ENCODE measurements at regions of chr1 and their contacts with region 1.

Region 1: DNA sequence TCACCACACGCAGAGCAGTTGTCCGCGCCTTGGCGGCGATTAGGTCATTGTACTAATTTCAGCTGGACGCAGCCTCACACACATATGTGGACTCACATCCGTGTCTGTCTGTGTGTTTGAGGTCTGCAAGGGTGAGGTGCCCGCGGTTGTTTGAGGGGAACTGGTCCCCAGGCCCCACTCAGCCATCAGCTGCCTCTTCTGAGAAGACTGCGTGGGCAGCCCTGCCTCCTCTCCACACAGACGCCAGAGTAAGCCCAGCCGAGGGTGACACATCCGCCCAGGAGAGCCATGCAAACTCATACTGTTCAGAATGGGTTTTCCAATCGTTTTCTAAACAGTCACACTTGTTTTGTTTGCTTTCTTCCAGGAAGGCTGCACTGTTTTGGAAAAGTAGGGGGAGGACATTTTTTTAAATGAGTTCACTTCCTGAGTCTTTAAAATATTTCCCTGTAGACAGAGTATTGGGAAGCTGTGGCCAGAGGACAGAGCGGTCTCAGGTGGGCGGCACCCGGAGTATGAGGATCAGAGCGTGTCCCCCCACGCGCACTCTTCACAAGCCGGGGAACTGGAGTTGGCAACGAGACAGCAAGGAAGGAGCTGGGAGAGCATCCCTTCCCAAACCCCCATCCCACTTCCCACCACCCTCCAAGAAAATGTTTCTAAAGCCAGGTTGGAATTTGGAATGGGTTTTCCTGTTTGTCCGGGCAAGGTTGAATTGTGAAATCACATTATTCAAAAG is 53.3 kb downstream of the TOMM20 start:
- DNase-seq: no peak
- H3K4me3 Mint-ChIP-seq: peak overlapping the region; percentile 56
- H3K27ac Mint-ChIP-seq: peak overlapping the region; percentile 99
- H3K4me1 Mint-ChIP-seq: peaks cover 34% of the 10 kb centered on the region
- H3K27me3 Mint-ChIP-seq: no peaks in the 10 kb centered on the region

Region 2: GRCh38 chr1:234499119-234499942 is 576.0 kb before region 1 on chr1:
- intact Hi-C with region 1: loop called (anchors 1 kb)
- DNase-seq: peak; percentile 81
- H3K4me3 Mint-ChIP-seq: peak overlapping the region; percentile 11
- H3K27ac Mint-ChIP-seq: peak overlapping the region; percentile 93
- H3K4me1 Mint-ChIP-seq: peaks cover 80% of the 10 kb centered on the region
- H3K27me3 Mint-ChIP-seq: no peaks in the 10 kb centered on the region

Region 3: DNA sequence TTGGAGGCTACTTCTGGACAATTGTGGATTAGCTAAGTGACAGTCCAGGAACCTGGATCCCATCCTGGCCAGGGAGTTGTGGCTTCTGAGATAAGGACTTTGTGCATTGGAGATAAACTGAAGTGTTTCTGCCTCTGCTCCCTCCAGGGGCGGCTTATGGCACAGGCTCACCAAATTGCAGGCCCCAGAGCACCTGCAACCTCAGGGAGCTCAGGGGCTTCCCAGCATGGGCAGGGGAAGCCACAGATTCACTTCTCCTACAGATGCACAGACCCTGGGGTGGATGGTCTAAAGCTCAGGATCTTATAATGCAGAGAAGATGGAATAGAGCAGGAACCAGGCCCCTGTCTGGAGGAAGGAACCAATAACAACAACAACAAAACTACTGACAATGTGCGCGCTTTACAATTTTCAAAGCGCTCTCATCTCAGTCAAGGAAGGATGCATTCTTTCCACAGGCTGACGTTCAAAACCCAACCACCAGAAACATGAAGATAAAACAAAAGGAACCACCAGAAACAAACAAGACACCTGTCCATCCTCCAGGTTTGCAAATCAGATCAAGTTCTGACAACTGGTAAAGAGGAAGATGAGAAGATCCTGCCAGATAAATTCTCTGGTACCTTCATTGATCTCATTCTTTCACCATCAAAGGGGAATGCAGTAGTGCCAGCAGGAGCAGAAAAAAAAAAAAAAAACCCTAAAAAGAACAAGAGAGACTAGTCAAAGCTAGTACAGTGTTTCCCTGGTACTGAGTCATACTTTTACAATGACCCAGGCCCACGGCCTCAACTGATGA is 344.4 kb before region 1 on chr1:
- intact Hi-C with region 1: loop called (anchors 1 kb)
- DNase-seq: peak; percentile 36
- H3K4me3 Mint-ChIP-seq: no peak overlapping the region
- H3K27ac Mint-ChIP-seq: peak overlapping the region; percentile 97
- H3K4me1 Mint-ChIP-seq: peaks cover 74% of the 10 kb centered on the region
- H3K27me3 Mint-ChIP-seq: no peaks in the 10 kb centered on the region

Region 4: GRCh38 chr1:234842726-234843641 is 232.4 kb before region 1 on chr1:
- intact Hi-C with region 1: loop called (anchors 1 kb)
- DNase-seq: peak; percentile 57
- H3K4me3 Mint-ChIP-seq: peak overlapping the region; percentile 77
- H3K27ac Mint-ChIP-seq: peak overlapping the region; percentile 90
- H3K4me1 Mint-ChIP-seq: peaks cover 93% of the 10 kb centered on the region
- H3K27me3 Mint-ChIP-seq: no peaks in the 10 kb centered on the region

Region 5: DNA sequence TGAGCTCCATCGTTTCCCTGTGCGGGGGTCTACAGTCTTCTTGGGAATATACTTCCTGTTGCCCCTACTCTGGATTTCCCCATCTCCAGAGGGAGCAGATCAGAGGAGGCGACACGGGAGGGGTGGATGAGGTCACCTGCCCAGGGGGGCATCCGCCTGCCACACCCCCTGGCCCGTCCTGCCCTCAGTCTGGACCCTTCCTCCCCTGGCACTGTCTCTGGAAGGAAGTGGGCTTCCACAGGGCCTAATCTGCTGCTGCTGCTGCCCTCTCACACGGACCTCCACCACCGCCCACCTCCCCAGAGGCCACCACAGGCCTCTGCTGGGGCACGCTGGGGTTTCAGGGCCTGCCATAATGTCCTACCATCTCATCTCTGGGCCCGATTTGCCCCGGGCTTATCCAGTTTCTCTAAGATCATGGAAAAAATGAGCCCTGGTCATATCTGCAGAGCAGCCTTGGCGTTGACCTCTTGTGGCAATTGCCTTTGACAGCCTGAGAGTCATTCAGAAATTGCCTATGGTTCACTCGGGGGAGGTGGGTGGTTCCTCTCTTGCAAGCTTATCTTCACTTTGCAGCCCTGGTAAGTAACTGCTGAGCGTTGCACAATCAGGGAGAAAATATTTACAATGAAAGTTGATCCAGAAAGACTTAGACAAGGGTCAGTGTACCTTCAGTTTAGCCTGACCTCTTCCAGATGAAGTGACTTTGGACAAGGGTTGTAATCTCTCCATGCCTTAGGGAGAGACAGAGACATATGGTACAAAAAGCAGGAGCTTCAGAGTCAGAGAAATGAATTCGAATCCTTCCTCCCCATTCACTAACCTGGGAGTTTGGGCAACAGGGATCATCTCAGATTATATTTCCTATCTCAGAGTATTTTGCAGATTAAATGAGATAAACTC is 199.2 kb before region 1 on chr1:
- intact Hi-C with region 1: loop called (anchors 2 kb)
- DNase-seq: no peak
- H3K4me3 Mint-ChIP-seq: no peak overlapping the region
- H3K27ac Mint-ChIP-seq: peak overlapping the region; percentile 88
- H3K4me1 Mint-ChIP-seq: peaks cover 63% of the 10 kb centered on the region
- H3K27me3 Mint-ChIP-seq: no peaks in the 10 kb centered on the region

Region 6: DNA sequence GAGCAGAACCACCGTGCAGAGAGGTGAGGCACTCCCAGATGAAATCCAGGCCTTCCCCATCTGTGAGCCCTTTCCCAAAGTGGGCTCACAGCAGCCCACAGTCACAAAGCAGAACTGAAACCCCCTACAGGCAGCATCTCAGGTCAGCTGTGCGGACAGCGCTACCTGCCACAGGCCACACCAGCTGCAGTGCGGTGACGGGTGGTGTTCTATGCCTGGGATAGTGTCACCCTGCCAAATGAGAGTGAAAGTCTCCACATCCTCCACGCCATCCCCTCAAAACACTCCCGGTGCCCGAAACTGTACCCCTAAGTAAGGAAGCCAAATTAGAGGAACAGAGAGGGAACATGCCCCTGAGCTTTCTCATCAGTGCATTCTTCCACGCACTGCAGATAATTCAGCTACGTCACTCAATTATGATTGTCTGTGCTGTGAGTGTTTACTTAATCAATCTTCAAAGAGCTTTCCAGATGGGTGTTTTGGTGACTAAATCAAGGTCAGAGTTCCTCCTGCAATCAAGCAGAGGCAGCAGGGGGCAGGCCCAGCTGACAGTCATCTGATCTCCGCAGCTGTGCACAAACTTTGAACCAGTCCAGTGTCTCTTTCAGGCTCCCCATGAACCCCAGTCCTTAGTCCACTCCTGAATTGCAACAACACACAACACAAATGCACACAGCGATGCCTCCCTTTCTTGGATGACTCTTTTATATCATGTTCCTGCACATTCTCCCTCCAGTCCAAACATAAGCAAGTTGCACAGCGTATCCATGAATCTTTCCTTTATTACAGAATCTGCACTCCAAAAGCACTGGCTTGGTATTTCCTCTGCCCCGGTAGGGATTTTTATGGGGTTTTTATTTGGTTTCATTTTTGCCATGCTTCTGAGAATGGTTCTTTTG is 96.7 kb before region 1 on chr1:
- intact Hi-C with region 1: loop called (anchors 1 kb)
- DNase-seq: no peak
- H3K4me3 Mint-ChIP-seq: peak overlapping the region; percentile 91
- H3K27ac Mint-ChIP-seq: peak overlapping the region; percentile 97
- H3K4me1 Mint-ChIP-seq: peaks cover 82% of the 10 kb centered on the region
- H3K27me3 Mint-ChIP-seq: no peaks in the 10 kb centered on the region

Region 7: GRCh38 chr1:235050911-235051360 is 24.4 kb before region 1 on chr1:
- intact Hi-C with region 1: loop called (anchors 1 kb)
- DNase-seq: no peak
- H3K4me3 Mint-ChIP-seq: no peak overlapping the region
- H3K27ac Mint-ChIP-seq: peak overlapping the region; percentile 88
- H3K4me1 Mint-ChIP-seq: peaks cover 50% of the 10 kb centered on the region
- H3K27me3 Mint-ChIP-seq: no peaks in the 10 kb centered on the region

Region 8: DNA sequence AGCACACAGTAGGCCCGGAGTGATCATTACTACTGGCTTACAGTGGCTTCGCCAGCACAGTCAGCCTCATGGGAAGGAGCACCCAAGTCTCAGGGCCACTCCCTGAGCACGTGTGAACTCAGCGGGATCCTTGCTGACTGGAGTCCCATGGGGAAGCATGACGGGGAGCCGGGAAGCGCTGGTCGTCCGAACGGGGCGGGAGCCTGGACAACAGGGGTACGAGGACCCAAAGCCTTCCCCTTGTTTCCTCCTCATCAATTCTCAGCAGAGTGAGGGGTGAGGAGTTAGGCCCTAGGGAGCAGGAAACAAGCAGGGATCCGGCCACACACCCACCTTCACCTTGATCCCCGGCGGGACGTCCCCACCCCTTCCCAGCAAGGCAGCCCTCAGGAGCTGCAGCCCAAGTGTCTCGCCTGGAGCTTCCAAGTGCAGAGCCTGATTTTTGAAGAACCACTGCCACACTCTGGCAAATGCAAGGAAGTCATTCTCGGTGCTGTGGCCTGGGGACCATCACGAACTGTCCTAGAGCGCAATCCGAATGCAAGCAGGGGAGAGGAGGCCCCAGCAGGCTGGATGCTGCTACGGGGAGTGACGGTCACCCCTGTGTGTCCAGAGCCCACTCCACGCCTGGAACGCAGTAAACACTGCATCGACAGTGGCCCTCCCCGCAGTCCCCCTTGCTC is 17.8 kb after region 1 on chr1:
- intact Hi-C with region 1: no loop called
- DNase-seq: no peak
- H3K4me3 Mint-ChIP-seq: no peak overlapping the region
- H3K27ac Mint-ChIP-seq: no peak overlapping the region
- H3K4me1 Mint-ChIP-seq: peaks cover 12% of the 10 kb centered on the region
- H3K27me3 Mint-ChIP-seq: peaks cover 1% of the 10 kb centered on the region

Region 9: GRCh38 chr1:235391874-235392273 is 316.5 kb after region 1 on chr1:
- intact Hi-C with region 1: no loop called
- DNase-seq: no peak
- H3K4me3 Mint-ChIP-seq: no peak overlapping the region
- H3K27ac Mint-ChIP-seq: no peak overlapping the region
- H3K4me1 Mint-ChIP-seq: peaks cover 2% of the 10 kb centered on the region
- H3K27me3 Mint-ChIP-seq: no peaks in the 10 kb centered on the region

Measured in activated T-helper 2 cell treated with anti-CD3 and anti-CD28 coated beads, Interferon-gamma antibody, Interleukin-2, Interleukin-4, amounts not matched to agents 10 μg/mL and 5 μg/mL and 100 μg/mL, durations not matched to agents 14 hours and 24 hours and 36 hours (primary cell).